ENCODE measurements at regions of chr2 and their contacts with region 1.

Region 1: DNA sequence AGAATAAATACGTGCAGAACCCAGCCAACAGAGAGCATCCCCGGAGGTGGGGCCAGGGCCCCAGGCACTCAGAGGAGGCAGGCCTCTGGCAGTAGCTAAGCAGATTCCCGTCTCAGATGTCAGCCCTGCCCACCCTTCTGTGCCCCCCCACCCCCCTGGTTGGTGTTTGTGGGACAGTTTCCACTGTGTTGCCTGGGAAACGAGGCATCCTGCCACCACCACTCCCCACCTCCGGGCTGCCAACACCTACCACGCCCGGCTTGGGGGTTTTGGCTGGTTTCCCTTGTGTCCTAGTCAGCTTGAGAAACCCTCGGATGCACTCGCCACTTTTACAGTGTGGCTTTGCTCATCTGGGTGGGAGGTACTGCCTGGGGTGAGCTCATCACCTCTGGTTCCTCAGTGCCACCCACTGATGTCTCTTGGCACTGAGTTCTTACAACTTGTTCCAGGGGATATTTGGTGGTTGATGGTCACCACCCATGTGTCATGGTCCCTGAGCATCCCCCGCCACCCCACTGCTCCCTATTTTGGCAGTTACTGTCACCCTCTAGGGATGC is 72.4 kb upstream of the YWHAQ start:
- DNase-seq: peak; percentile 98
- ATAC-seq: peak; percentile 91
- H3K4me3 ChIP-seq: peak overlapping the region; percentile 46; the same call in 1 of the 2 replicates
- H3K27ac ChIP-seq: peak overlapping the region; percentile 99
- H3K4me1 ChIP-seq: peaks cover 35% of the 10 kb centered on the region
- H3K27me3 ChIP-seq: no peaks in the 10 kb centered on the region
- CTCF ChIP-seq: peak; percentile 35

Region 2: GRCh38 chr2:9555297-9556141 is 147.6 kb before region 1 on chr2 and contains the start of gene ADAM17:
- CTCF ChIA-PET with region 1: interaction called, 5 read pairs
- POLR2A ChIA-PET with region 1: no interaction called
- intact Hi-C with region 1: loop called (anchors 2 kb)
- DNase-seq: peak; percentile 98
- ATAC-seq: peak; percentile 86
- H3K4me3 ChIP-seq: peak within 1 kb of the TSS; percentile 96
- H3K27ac ChIP-seq: peak within 1 kb of the TSS; percentile 92
- H3K4me1 ChIP-seq: peaks cover 45% of the 10 kb centered on the region
- H3K27me3 ChIP-seq: no peaks in the 10 kb centered on the region
- CTCF ChIP-seq: peak; percentile 55
- total RNA-seq, gene ADAM17: 23.0 and 34.3 TPM in 2 replicates

Region 3: DNA sequence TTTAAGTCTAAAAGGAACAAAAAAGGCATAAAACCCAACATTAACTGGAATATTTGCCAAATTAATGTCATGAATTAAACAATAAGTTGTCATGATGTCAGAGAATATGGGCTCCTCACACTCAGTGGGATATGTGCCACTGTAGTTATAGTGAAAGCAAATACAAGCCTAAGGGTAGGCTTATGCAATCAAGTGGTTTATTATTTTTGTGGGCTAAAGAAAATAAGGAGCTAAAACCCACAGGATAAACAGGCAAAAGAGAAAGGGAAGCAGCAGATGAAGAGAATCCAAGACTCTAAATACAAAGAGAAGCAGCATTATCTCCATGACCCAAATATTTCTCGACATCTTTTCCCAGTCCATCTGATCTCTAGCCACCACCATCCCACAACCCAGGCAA is 89.9 kb before region 1 on chr2:
- CTCF ChIA-PET with region 1: interaction called, 10 read pairs
- POLR2A ChIA-PET with region 1: no interaction called
- intact Hi-C with region 1: no loop called
- DNase-seq: peak; percentile 43
- ATAC-seq: no peak; the same call in 1 of the 2 replicates
- H3K4me3 ChIP-seq: no peak overlapping the region
- H3K27ac ChIP-seq: no peak overlapping the region
- H3K4me1 ChIP-seq: peaks cover 23% of the 10 kb centered on the region
- H3K27me3 ChIP-seq: no peaks in the 10 kb centered on the region
- CTCF ChIP-seq: no peak

Region 4: GRCh38 chr2:9638532-9638931 is 64.6 kb before region 1 on chr2:
- CTCF ChIA-PET with region 1: interaction called, 3 read pairs
- POLR2A ChIA-PET with region 1: interaction called, 6 read pairs
- intact Hi-C with region 1: loop called (anchors 1 kb)
- DNase-seq: peak; percentile 94
- ATAC-seq: peak; percentile 87
- H3K4me3 ChIP-seq: no peak overlapping the region
- H3K27ac ChIP-seq: peak overlapping the region; percentile 49; the same call in 1 of the 2 replicates
- H3K4me1 ChIP-seq: peaks cover 35% of the 10 kb centered on the region
- H3K27me3 ChIP-seq: no peaks in the 10 kb centered on the region
- CTCF ChIP-seq: no peak

Region 5: GRCh38 chr2:9656270-9656766 is 46.8 kb before region 1 on chr2:
- CTCF ChIA-PET with region 1: no interaction called
- POLR2A ChIA-PET with region 1: no interaction called
- intact Hi-C with region 1: loop called (anchors 2 kb)
- DNase-seq: peak; percentile 94
- ATAC-seq: peak; percentile 98
- H3K4me3 ChIP-seq: peak overlapping the region; percentile 20; the same call in 1 of the 2 replicates
- H3K27ac ChIP-seq: peak overlapping the region; percentile 88
- H3K4me1 ChIP-seq: peaks cover 28% of the 10 kb centered on the region
- H3K27me3 ChIP-seq: no peaks in the 10 kb centered on the region
- CTCF ChIP-seq: no peak

Region 6: DNA sequence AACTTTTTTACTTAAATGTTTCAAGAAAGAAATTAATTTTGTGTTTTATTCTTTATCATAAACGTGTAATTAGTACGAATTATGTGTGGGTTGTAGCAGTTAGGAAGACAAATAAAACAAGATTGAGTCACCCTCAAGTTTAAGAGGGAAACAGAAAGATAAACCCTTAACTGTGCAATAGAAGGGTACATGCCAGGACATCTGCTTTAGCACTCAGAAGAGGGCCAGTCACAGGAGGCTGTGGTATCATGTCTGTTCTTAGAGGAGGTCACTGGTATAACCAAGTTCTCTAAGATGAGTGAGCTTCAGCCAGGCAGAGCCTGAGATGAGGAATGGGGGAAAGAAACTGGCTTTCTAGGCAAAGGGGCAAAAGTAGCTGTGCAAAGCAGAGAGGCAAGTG is 205.9 kb after region 1 on chr2:
- CTCF ChIA-PET with region 1: no interaction called
- POLR2A ChIA-PET with region 1: no interaction called
- intact Hi-C with region 1: no loop called
- DNase-seq: no peak
- ATAC-seq: peak; percentile 24; the same call in 1 of the 2 replicates
- H3K4me3 ChIP-seq: no peak overlapping the region
- H3K27ac ChIP-seq: no peak overlapping the region
- H3K4me1 ChIP-seq: peaks cover 5% of the 10 kb centered on the region
- H3K27me3 ChIP-seq: no peaks in the 10 kb centered on the region
- CTCF ChIP-seq: no peak